ENCODE measurements at regions of chr15 and their contacts with region 1.

Region 1: GRCh38 chr15:78308422-78309032 is 9.1 kb upstream of the SKIC8 start:
- DNase-seq: peak; percentile 57 to 94
- H3K4me3 ChIP-seq: no peak overlapping the region
- H3K27ac ChIP-seq: no peak overlapping the region
- H3K4me1 ChIP-seq: peaks cover 0 to 9% (median 2%) of the 10 kb centered on the region in 4 experiments; a peak in 5 of 7 replicates
- H3K27me3 ChIP-seq: no peaks in the 10 kb centered on the region
- CTCF ChIP-seq: peak; percentile 98 to 99 (median 99)
- EP300 ChIP-seq: no peak; a peak in 1 of 3 replicates
- POLR2A ChIP-seq: no peak
- RAD21 ChIP-seq: peak; percentile 100

Region 2: GRCh38 chr15:78340231-78341056 is 31.9 kb after region 1 on chr15 and contains the start of gene CRABP1:
- CTCF ChIA-PET with region 1: interaction called, 30 read pairs
- POLR2A ChIA-PET with region 1: interaction called, 11 read pairs
- DNase-seq: peak in 1 of 2 experiments; percentile 84
- H3K4me3 ChIP-seq: peak within 1 kb of the TSS; percentile 39 to 78 (median 66)
- H3K27ac ChIP-seq: no peak within 1 kb of the TSS
- H3K4me1 ChIP-seq: peaks cover 2 to 17% (median 8%) of the 10 kb centered on the region in 4 experiments; a peak in 5 of 7 replicates
- H3K27me3 ChIP-seq: peaks cover 0 to 24% (median 16%) of the 10 kb centered on the region in 4 experiments; a peak in 5 of 7 replicates
- CTCF ChIP-seq: no peak
- EP300 ChIP-seq: no peak
- POLR2A ChIP-seq: peak; percentile 42 to 64; a peak in 2 of 3 replicates
- RAD21 ChIP-seq: 0 out of 4 replicates have a peak, but pooled peaks of 1 of the 2 experiments have one; percentile 12
- total RNA-seq, gene CRABP1: 385 and 388 TPM in 2 replicates

Region 3: DNA sequence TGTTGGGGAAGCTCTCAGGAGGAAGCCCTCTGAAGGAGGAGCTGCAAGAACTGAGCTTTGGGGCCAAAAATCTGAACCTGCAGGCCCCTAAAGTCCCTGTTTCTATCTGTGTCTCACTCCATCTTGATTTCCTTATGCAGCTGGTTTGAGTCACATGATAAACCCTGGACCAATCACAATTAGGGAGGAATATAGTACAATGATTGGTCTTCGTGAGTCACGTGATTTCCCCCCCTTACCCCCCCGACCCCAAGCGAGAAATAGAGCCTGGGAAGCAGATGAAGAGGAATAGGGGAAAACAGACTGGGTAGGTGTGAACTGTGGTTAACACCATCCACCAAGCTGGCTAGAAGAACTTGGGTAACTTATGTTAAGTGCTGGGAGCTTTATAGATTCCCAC is 44.6 kb after region 1 on chr15:
- CTCF ChIA-PET with region 1: no interaction called
- POLR2A ChIA-PET with region 1: no interaction called
- DNase-seq: no peak
- H3K4me3 ChIP-seq: no peak overlapping the region
- H3K27ac ChIP-seq: no peak overlapping the region
- H3K4me1 ChIP-seq: peaks cover 0 to 3% (median 1%) of the 10 kb centered on the region in 4 experiments; a peak in 5 of 7 replicates
- H3K27me3 ChIP-seq: no peaks in the 10 kb centered on the region
- CTCF ChIP-seq: no peak
- EP300 ChIP-seq: no peak
- POLR2A ChIP-seq: no peak
- RAD21 ChIP-seq: no peak

Region 4: DNA sequence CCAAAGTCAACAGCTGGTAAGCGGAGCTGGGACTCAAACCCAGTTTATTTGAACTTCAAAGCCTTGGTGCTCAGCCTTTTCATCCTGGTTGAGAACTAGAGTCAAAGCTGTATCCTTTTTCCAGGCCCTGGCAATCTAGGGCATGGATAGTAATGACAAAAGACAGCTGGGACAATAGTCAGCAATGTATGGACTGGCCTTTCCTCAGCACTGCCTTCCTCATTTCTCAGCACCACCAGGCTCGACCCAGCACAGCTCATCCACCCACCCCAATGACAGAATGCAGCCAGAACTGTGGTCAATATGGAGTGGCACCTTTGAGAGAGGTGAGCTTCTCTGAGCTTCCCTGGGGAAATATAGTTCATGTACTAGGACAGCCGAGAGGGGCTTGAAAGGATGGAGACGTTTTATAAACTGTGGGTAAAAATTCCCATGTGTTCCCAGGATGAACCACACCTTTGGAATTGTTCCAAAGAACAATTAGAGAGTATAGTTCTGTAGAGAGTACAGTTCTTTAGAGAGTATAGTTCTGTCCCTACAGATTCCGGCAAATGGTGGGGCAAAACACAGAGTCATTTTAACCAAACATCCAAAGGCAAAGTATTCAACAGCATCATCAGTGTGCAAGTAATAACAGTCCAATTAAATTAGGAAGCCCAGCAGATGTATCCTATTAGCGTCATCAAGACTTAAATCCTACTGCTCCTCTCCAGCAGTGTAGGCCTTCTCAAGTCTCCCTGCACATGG is 99.3 kb after region 1 on chr15:
- CTCF ChIA-PET with region 1: interaction called, 22 read pairs
- POLR2A ChIA-PET with region 1: no interaction called
- DNase-seq: no peak
- H3K4me3 ChIP-seq: no peak overlapping the region
- H3K27ac ChIP-seq: no peak overlapping the region
- H3K4me1 ChIP-seq: peaks cover 0 to 8% (median 5%) of the 10 kb centered on the region in 4 experiments; a peak in 5 of 7 replicates
- H3K27me3 ChIP-seq: no peaks in the 10 kb centered on the region; a peak in 2 of 7 replicates
- CTCF ChIP-seq: no peak
- EP300 ChIP-seq: no peak
- POLR2A ChIP-seq: no peak
- RAD21 ChIP-seq: no peak

Region 5: DNA sequence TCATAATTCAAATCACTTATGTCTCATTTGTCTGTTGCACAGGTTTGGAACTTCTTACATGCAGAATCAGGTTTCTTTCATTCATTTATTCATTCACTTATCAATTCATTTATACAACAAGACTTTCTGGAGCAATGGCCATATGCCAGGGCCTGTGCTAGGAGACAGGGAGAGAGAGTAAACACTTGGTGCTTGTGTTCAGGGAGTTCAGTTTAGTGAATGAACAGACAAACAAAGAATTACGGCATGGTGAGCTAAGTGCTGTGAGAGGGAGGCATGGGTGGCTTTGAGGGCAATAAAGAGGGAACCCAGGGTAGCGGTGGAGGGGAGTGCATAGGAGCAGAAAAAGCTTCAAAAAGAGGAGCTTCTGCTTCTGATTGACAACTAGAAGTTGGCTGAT is 121.0 kb after region 1 on chr15:
- CTCF ChIA-PET with region 1: interaction called, 173 read pairs
- POLR2A ChIA-PET with region 1: no interaction called
- DNase-seq: no peak
- H3K4me3 ChIP-seq: no peak overlapping the region
- H3K27ac ChIP-seq: no peak overlapping the region
- H3K4me1 ChIP-seq: no peaks in the 10 kb centered on the region
- H3K27me3 ChIP-seq: no peaks in the 10 kb centered on the region; a peak in 1 of 7 replicates
- CTCF ChIP-seq: no peak
- EP300 ChIP-seq: no peak
- POLR2A ChIP-seq: no peak
- RAD21 ChIP-seq: no peak